GM10248 (cell line): ENCODE measurements at regions of chr2 and their contacts with region 1.

Region 1: DNA sequence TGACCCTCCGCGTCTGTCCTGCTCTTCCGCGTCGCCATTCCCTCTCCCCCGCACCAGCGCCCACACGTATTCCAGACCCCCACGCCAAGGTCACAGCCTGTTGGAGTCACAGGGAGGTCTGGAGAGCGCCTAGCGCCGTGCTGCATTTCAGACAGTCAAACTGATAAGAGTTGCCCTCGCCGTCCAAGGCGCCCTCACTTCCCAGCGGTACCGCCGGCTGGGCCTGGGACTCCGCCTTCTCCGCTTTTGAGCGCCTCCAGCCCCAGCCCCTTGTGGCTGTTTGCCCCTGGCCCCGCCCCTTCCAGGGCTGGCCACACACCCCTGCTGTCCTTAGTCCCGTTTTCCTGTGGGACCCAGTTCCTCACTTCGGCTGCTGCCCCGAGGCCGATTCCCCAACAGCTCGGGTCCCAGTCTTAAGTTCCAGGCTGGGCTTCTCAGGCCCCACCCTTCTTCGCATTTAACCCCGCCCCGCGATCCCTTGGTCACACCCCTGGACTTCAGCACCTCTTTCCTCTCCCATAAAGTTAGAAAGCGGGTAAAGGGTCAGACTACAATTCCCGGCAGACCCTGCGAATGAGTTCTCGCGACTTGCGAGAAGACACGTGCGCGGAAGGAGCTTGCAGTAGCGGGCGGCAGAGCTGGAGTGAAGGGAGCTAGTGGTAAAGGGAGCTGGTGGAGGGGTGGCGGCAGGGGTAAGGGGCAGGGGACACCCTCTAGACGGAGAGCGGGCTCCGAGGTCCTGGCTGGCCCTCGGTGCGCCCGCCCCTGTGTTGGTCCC is at the start of gene GMPPA:
- DNase-seq: peak; percentile 98
- CTCF ChIP-seq: no peak

Region 2: DNA sequence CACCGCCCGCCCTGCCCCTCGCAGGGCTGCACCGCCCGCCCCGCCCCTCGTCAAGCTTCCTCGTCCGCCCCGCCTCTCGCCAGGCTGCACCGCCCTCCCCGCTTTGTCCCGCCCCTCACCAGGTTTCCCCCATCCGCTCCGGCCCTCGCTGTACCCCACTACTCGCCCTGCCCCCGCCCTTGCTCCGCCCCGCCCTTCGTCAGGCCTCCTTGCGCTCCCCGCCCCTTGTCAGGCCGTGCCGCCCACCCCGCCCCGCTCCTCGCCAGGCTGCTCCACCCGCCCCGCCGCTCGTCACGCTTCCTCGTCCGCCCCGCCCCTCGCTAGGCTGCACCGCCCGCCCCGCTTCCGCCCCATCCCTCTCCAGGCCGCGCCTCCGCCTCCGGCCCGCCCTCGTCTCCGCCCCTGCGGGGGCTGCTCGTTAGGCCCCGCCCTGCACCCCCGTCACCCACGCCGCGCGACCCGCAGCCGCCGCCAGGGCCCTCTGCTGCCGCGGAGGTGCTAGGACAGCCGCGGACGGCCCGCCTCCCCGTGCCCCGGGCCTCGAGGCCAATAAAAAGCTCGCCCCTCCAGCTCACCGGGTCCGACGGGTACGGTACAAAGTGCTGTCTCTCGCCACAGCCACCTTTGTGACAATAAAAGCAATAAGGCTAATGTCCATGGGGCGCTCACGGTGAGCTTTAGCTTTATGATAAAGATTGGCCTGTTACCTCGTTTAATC is 110.2 kb before region 1 on chr2:
- CTCF ChIA-PET with region 1: interaction called, 11 read pairs
- POLR2A ChIA-PET with region 1: interaction called, 6 read pairs
- DNase-seq: peak; percentile 99
- CTCF ChIP-seq: peak; percentile 60

Region 3: DNA sequence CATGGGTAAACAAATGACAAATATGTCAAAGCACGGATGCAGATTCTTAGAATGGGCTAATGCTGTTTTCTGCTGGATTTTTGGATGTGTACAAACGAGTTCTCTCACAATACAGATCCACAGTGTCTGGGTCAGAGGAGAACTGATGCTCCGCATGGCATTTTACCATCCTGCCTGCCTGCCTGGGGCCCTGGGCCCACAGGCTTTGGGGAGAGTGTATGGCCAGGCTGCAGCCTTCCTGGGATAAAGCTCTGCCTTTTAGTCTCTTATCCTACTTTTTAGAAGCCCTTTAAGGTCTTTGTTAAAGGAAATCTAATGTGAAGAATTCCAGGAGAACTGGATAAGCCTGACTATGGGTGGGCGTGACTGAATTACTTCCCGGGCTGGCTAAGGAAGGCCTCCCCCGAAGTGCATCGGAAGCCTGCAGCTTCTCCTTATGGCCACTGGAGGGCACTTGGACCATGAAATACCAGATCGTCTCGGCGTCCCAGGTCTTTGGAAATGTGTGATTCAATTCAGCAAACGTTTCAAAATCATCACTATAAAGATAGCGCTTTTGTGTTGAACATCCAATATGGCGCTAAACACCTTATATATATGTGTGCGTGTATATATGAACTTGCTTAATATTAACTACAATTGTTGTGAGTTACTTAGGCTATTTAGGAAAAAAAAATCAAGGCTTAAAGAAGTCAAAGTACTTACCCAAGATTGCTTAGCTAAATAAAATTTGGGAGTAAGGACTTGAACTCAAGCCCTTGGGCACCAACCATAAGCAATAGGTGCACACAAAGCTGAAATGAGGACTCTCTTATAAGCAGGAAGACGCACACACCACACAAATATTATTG is 95.6 kb before region 1 on chr2:
- CTCF ChIA-PET with region 1: interaction called, 12 read pairs
- POLR2A ChIA-PET with region 1: no interaction called
- DNase-seq: peak; percentile 77
- CTCF ChIP-seq: peak; percentile 78

Region 4: GRCh38 chr2:219475697-219476651 is 22.5 kb before region 1 on chr2:
- CTCF ChIA-PET with region 1: interaction called, 40 read pairs
- POLR2A ChIA-PET with region 1: no interaction called
- DNase-seq: peak; percentile 79
- CTCF ChIP-seq: peak; percentile 84

Region 5: DNA sequence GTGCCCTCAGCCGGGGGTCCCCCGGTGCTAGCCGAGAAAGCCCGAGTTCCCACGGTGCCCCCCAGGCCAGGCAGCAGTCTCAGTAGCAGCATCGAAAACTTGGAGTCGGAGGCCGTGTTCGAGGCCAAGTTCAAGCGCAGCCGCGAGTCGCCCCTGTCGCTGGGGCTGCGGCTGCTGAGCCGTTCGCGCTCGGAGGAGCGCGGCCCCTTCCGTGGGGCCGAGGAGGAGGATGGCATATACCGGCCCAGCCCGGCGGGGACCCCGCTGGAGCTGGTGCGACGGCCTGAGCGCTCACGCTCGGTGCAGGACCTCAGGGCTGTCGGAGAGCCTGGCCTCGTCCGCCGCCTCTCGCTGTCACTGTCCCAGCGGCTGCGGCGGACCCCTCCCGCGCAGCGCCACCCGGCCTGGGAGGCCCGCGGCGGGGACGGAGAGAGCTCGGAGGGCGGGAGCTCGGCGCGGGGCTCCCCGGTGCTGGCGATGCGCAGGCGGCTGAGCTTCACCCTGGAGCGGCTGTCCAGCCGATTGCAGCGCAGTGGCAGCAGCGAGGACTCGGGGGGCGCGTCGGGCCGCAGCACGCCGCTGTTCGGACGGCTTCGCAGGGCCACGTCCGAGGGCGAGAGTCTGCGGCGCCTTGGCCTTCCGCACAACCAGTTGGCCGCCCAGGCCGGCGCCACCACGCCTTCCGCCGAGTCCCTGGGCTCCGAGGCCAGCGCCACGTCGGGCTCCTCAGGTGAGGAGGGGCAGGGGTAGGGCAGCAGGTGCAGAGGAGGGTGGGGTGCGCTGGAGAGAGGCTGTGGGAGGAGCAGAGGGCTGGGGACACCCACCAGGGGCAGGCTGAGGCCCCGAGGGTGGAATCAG is 13.9 kb before region 1 on chr2:
- CTCF ChIA-PET with region 1: interaction called, 23 read pairs
- POLR2A ChIA-PET with region 1: no interaction called
- DNase-seq: no peak
- CTCF ChIP-seq: no peak

Region 6: DNA sequence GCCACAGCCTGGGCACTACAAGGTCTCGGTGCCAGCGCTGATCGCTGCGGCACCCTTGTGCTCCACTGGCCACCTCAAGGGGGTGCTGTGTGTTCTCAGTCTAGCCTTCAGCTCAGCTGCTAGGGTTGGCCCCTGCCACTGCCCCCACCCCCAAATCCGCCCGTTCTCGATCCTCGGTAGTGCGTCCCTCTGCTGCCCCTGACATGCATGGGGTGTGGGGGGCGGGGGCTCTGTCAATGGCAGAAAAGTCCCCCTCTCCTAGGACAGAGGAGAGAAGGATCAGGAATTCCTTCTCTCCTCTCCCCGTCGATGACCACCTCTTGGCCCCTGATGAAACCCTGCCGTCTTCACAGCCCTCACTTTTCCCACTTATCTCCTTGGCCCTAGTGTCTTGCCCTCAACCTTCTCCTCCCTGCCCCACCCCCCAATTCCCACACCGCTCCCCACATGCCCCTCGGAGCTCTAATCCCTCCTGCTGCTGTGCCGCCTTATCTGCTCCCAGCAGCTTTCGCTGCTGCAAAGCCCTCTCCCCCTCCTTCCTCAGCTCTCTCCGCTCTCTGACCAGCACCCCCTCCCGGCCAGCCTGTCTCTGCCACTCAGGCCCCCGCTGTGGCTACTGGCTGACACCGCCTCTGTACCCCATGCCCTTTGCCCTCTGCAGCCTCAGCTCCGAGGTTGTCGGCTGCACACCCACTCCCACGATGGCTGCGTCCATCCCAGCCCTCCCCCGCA is 11.5 kb after region 1 on chr2:
- CTCF ChIA-PET with region 1: interaction called, 50 read pairs
- POLR2A ChIA-PET with region 1: interaction called, 3 read pairs
- DNase-seq: peak; percentile 70
- CTCF ChIP-seq: peak; percentile 81

Region 7: DNA sequence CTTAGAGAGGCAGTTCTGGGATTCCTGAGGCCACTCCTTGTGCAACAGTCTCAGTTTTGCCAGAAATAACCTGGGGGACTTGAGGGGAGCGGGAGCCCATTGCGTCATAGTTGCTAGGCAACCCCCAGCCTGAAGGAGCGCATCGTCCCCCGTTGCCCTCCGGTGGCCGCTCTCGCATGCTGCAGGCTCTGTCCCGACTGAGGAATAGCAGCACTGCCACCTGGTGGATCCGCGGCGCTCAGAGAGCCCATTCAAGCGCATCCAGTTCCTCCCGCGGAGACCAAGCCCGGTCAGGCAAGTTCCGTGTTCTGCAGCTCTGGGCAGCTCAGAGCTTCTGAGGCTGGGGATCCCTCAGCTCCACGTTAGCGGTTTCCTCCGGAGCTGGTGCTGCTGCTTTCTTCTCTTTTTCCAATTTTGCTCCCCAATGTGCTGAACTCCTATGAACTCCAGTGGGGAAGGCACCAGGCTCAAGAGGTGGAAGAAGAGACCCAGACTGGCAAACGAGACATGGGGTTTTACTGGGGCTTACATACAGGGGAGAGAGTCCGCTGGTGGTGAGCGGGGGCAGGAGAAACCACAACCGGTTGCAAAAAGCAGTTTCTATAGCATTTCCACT is 144.1 kb after region 1 on chr2:
- CTCF ChIA-PET with region 1: interaction called, 11 read pairs
- POLR2A ChIA-PET with region 1: no interaction called
- DNase-seq: peak; percentile 94
- CTCF ChIP-seq: peak; percentile 100